Posterior cingulate gyrus (tissue), 11 donors: ENCODE measurements at regions of chr12 and their contacts with region 1.

Region 1: DNA sequence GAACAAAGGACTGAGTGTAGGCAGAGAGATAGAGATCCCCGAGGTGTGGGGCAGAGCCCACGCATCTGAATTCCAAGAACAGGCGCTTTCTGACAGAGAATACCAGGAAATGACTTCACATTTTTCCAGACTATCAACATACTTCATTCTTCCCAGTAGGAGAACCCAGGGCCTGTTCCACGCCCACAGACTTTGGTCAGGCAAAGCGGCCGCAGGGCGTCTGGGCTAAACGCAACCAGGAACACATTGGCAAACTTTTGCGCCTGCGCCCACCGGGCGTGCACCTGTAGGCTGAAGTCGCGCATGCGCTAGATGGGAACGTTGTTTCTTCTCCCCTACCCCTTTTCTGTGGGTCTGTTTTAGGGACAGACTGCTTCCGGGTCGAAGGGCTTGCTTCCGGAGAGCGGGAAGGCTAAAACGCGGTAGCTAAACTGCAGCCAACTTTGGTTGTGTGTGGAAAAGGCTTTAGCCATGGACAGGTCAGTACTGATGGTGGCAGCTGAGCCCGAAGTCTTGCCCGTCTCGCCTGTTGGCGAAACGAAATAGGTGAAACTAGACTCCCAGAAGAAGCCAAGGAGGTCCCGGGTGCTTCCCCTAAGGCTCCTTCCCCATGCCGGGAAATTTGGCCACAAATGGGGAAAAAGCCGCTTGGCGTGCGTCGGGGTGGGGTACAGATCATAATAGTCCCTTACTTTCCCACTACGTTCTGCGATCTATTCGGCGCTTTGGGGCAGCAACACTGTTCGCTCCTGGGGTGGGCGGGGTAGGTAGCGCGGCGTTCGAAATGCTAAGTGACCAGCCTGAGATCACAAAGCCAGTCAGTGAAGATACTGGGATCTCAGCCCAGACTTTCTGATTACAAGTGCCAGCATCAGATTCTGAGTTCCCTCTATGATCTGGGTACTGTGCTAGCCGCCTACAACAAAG is at the start of gene NUP107:
- DNase-seq: peak; percentile 93 to 99 (median 95)

Region 2: GRCh38 chr12:68331869-68332727 is 354.8 kb before region 1 on chr12 and contains the start of gene MDM1:
- intact Hi-C with region 1: loop called (anchors 10 kb)
- DNase-seq: peak; percentile 93 to 100 (median 97)

Region 3: DNA sequence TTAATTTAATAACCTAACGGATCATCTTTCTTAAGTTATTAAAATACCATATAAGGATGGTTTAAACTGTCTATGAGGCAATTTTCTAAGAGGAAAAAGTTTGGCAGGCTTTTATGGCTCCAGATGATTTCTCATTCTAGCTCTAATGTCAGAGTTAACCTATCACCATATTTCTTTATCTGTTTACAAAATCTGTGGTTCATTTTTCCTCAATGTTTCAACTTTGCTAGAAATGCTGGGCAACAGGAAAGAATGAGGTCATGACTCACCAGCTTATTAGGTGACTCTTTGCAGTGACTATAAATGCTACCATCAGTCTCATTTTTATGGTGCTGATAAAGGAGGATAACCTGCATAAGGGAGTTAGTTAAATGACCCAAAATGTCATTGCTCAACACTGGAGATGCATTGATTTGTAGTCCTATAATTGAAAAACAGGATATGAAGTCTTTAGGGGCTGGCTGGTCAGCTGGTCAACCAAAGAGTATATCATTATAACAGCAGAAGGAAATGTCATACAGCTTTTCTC is 121.4 kb before region 1 on chr12:
- intact Hi-C with region 1: no loop called
- DNase-seq: no peak

Region 4: DNA sequence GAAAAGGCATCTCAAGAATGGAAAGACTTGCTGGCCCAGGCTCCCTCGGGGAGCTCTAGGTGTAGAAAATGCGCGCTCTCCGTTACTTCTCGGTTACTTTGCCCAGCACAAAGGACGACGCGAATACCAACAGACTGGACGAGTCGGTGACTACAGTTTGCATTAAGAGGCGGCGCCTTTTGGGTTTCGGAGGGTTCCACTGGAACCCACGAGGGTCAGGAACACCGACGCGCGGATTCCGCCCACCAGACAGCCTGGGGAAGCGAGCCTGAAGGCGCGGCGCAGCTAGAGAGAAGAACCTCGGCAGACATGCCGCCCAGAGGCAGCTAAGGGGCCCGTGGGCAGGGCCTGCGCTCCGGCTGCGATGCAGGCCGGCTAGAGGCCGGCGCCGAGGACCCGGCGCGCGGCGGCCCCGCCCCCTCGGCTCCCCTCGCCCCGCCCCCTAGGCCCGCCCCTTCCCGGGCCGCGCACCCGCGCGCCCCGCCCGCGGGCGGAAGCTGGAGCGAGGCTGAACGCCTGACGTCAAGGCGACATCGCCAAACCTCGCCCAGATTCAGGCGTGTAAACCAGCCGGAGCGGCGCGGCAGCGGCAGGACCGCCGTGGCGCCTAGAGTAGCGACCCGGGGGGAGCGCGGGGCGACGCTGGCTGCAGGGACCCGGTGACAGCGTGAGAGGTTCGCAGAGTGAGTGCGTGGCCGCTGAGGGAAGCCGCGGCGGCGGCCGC is 76.3 kb before region 1 on chr12 and contains the start of gene RAP1B:
- intact Hi-C with region 1: loop called (anchors 1 kb)
- DNase-seq: peak; percentile 83 to 99 (median 90)

Region 5: GRCh38 chr12:68745904-68746571 is 59.2 kb after region 1 on chr12 and contains the start of gene SLC35E3:
- intact Hi-C with region 1: loop called (anchors 2 kb)
- DNase-seq: peak; percentile 90 to 99 (median 94)

Region 6: DNA sequence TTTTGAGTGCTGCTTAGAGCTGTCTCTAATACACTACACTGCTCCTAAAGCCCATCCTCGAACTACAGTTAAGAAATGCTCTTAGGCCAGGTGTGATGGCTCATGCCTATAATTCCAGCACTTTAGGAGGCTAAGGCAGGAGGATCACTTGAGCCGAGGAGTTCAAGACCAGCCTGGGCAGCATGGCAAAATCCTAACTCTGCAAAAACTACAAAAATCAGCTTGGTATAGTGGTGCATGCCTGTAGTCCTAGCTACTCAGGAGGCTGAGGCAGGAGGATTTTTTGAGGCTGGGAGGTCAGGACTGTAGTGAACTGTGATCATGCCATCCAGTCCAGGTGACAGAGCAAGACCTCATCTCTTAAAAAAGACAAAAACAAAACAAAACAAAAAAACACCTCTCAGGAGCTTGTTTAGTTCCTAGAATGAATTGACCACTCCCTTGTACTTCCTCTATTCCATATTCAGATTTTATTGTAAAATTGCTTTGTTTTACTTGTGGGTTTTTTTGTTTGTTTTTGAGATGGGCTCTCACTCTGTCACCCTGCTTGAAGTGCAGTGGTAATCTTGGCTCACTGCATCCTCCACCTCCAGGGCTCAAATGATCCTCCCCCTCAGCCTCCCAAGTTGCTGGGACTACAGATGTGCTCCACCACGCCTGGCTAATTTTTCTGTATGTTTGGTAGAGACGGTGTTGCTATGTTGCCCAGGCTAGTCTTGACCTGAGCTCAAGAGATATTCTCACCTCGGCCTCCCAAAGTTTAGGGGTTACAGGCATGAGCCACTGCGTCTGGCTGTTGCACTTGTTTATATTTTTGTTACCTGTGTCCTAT is 134.7 kb after region 1 on chr12:
- intact Hi-C with region 1: loop called (anchors 5 kb)
- DNase-seq: no peak

Region 7: DNA sequence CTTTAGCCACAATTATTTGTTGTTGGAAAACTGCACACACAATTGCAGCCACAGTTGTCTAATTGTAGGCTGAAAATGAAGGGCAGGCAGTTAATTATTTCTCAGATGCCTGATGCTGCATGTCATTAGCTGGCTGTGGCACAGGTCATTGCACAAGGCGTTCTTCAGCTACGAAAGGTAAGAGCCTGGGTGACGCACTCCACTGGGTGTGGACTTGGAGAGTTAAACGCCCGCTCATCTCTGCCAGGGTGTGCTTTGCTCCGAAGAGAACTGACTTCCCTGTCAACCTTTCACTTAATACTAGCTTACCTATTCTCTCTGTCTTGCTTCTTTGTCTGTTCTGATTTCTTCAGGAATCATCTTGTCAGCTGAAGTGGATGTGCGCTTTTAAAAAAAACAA is 337.6 kb after region 1 on chr12:
- intact Hi-C with region 1: no loop called
- DNase-seq: peak in 1 of 10 donors; percentile 33